MCF 10A (cell line): ENCODE measurements at regions of chr1 and their contacts with region 1.

Region 1: DNA sequence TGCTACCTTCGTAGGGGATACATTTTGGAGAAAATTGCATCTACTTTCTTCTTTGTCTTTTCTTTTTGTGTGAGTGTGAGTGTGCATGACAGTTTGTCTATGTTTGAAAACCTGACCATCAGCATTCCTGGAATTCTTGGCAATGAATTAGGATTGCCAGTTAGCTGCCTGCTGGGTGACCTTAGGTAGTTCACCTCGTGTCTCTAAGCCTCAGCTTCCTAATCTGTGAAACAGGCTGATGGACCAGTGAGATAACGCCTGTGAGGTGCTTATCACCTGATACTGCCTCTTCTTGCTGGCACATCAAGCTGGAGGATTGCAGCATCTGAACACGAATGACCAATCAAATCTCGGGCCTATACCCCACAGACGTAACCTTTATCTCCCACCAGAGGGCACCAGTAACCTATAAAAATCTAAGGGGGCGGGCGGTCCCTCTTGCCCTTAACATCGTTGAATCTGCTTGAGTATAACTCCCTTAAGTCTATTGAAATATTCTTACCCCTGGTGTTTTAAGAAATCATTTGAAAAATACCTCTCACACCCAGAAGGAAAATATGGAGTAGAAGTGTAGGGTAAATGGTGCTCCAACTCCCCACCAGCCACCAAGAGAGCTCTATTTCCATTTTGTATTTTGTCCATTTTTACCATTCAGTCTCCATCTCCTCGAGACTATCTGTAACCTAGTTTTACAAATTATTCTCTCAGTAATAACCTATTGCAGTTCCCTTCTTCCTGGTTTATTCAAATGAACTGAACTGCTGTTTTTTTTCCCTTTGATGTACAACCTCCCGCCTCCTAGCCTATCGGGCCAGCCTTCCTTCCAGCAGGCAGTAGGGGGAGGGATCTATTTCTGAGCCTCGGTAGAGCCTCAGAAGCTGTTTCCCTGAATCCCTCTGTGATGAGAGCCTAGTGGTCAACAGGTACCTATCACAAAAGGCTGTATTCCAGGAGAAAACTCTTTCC is 49.7 kb downstream of the MDM4 start:
- DNase-seq: peak; percentile 91
- H3K4me3 Mint-ChIP-seq: no peak overlapping the region
- H3K27ac Mint-ChIP-seq: no peak overlapping the region
- H3K4me1 Mint-ChIP-seq: peaks cover 9% of the 10 kb centered on the region
- H3K27me3 Mint-ChIP-seq: no peaks in the 10 kb centered on the region
- CTCF ChIP-seq: peak; percentile 95

Region 2: GRCh38 chr1:204583906-204584632 is 18.2 kb after region 1 on chr1:
- CTCF ChIA-PET with region 1: interaction called, 17 read pairs
- POLR2A ChIA-PET with region 1: interaction called, 3 read pairs
- intact Hi-C with region 1: no loop called
- DNase-seq: peak; percentile 49
- H3K4me3 Mint-ChIP-seq: no peak overlapping the region
- H3K27ac Mint-ChIP-seq: no peak overlapping the region
- H3K4me1 Mint-ChIP-seq: no peaks in the 10 kb centered on the region
- H3K27me3 Mint-ChIP-seq: no peaks in the 10 kb centered on the region
- CTCF ChIP-seq: no peak

Region 3: DNA sequence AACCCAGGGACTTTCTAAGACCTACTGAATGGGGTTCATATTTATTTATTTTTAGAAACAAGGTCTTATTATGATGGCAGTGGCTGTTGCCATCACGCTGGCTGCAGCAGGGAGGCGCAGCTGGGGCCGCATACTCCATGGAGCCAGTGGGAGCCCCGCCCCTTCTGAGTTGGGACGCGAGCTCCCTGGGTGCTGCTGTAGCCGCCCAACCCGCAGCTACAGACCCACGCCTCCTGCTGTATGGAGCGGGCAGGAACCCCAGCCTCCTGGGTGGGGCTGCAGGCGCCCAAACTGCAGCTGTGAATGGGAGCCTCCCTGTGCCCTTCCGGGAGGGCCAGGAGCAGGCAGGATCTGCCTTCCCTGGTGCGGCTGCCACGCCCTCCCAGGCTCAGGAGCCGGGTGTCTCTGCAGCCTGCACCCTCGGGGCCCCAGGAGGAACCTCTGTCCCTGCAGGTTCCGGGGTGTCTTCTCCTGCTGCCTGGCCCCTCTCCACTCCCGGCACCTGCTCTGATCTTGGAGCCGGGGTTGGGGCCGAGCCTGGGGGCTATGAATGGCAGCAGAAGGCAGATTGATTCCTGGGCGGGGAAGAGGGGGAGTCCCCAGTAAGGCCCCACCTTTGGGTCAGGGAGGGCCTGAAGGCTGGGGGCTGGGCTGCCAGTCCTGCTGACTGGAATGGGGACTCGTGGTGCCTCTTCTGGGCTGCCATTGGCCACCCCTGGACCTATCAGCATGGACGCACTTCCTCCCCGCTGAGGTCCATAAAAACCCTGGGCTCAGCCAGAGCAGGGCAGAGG is 186.2 kb after region 1 on chr1:
- CTCF ChIA-PET with region 1: interaction called, 14 read pairs
- POLR2A ChIA-PET with region 1: no interaction called
- intact Hi-C with region 1: no loop called
- DNase-seq: peak; percentile 83
- H3K4me3 Mint-ChIP-seq: no peak overlapping the region
- H3K27ac Mint-ChIP-seq: no peak overlapping the region
- H3K4me1 Mint-ChIP-seq: no peaks in the 10 kb centered on the region
- H3K27me3 Mint-ChIP-seq: peaks cover 41% of the 10 kb centered on the region
- CTCF ChIP-seq: peak; percentile 44

Region 4: DNA sequence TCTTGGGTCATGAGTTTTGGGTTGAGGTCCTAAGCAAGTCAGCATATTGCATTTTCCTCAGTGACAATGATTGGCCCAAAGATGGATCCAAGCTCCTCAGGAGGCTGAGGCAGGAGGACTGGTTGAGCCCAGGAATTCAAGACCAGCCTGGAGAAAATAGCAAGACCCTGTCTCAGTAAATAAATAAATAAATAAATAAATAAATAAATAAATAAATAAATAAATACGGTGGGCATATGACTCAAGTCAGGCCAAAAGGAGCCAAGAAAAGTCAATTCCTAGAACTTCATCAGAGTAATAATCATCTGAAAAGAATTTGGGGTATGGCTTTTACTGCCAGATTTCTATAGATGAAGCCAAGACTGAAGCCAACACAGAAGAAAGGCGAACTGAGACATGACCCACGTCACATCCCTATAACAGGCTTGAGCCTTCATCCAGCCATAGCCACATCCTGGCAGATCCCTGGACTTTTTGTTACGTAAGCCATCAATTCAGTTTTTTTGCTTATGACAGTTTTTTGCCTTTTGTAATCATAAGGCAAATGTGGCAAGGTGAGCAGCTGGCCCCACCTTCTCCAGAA is 216.3 kb after region 1 on chr1:
- CTCF ChIA-PET with region 1: interaction called, 1,156 read pairs
- POLR2A ChIA-PET with region 1: no interaction called
- intact Hi-C with region 1: no loop called
- DNase-seq: peak; percentile 27
- H3K4me3 Mint-ChIP-seq: no peak overlapping the region
- H3K27ac Mint-ChIP-seq: no peak overlapping the region
- H3K4me1 Mint-ChIP-seq: no peaks in the 10 kb centered on the region
- H3K27me3 Mint-ChIP-seq: peaks cover 54% of the 10 kb centered on the region
- CTCF ChIP-seq: no peak